H1 (cell line): ENCODE measurements at regions of chr17 and their contacts with region 1.

Region 1: GRCh38 chr17:45135192-45135977 is at the start of gene ACBD4:
- DNase-seq: peak; percentile 87 to 99
- H3K4me3 ChIP-seq: peak within 1 kb of the TSS; percentile 26 to 65 (median 58)
- H3K27ac ChIP-seq: no peak within 1 kb of the TSS
- H3K4me1 ChIP-seq: peaks cover 0 to 6% (median 2%) of the 10 kb centered on the region in 4 experiments; a peak in 3 of 7 replicates
- H3K27me3 ChIP-seq: no peaks in the 10 kb centered on the region
- CTCF ChIP-seq: peak; percentile 100
- EP300 ChIP-seq: peak in 1 of 2 experiments; percentile 41; a peak in 1 of 3 replicates
- POLR2A ChIP-seq: 0 out of 3 replicates have a peak, but pooled peaks of 1 of the 2 experiments have one; percentile 43
- RAD21 ChIP-seq: peak; percentile 94 to 95
- total RNA-seq, gene ACBD4: 9.3 and 10.7 TPM in 2 replicates

Region 2: GRCh38 chr17:45029096-45029495 is 106.3 kb before region 1 on chr17:
- CTCF ChIA-PET with region 1: no interaction called
- POLR2A ChIA-PET with region 1: no interaction called
- DNase-seq: no peak
- H3K4me3 ChIP-seq: no peak overlapping the region
- H3K27ac ChIP-seq: no peak overlapping the region; the same call in 1 of the 2 replicates
- H3K4me1 ChIP-seq: no peaks in the 10 kb centered on the region
- H3K27me3 ChIP-seq: no peaks in the 10 kb centered on the region
- CTCF ChIP-seq: no peak
- EP300 ChIP-seq: no peak
- POLR2A ChIP-seq: no peak
- RAD21 ChIP-seq: no peak

Region 3: DNA sequence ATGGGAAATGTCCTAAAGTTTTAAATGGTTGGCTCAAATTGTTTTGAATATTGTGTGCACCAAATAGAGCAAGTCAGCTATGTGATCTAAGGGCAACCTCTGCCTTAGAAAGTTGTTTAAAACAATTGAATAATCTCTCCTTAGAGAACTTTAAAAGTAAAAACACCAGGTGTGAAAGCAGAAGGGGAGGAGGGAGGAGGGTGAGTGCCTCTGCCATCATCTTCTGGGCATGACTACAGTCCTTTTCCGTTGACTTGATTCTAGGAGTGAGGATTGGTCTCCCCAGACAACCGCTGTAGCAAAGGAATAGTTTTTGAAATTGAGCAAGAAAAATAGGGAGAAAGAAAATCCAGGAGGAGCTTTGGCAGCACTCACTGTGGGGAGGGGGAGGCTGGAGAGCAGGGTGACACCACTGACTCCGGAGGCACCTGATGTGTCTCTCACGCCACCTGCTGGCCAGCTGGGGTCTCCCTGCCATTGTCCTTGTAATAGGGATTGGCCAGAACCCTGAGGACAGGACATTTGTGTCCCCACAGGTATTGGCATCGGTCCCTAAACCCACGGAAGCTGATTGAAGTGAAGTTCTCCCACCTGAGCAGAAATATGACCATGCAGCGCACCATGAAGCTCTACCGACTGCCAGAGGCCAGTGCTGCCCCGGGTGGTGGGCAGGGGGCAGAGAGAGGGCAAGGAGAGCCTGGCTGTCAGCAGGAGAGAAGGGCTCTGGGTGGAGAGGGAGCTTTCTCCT is 36.3 kb before region 1 on chr17:
- CTCF ChIA-PET with region 1: interaction called, 69 read pairs
- POLR2A ChIA-PET with region 1: no interaction called
- DNase-seq: peak; percentile 63 to 95
- H3K4me3 ChIP-seq: no peak overlapping the region
- H3K27ac ChIP-seq: no peak overlapping the region
- H3K4me1 ChIP-seq: no peaks in the 10 kb centered on the region; a peak in 1 of 7 replicates
- H3K27me3 ChIP-seq: no peaks in the 10 kb centered on the region
- CTCF ChIP-seq: peak; percentile 78 to 96 (median 95)
- EP300 ChIP-seq: no peak
- POLR2A ChIP-seq: no peak
- RAD21 ChIP-seq: peak; percentile 73 to 76

Region 4: DNA sequence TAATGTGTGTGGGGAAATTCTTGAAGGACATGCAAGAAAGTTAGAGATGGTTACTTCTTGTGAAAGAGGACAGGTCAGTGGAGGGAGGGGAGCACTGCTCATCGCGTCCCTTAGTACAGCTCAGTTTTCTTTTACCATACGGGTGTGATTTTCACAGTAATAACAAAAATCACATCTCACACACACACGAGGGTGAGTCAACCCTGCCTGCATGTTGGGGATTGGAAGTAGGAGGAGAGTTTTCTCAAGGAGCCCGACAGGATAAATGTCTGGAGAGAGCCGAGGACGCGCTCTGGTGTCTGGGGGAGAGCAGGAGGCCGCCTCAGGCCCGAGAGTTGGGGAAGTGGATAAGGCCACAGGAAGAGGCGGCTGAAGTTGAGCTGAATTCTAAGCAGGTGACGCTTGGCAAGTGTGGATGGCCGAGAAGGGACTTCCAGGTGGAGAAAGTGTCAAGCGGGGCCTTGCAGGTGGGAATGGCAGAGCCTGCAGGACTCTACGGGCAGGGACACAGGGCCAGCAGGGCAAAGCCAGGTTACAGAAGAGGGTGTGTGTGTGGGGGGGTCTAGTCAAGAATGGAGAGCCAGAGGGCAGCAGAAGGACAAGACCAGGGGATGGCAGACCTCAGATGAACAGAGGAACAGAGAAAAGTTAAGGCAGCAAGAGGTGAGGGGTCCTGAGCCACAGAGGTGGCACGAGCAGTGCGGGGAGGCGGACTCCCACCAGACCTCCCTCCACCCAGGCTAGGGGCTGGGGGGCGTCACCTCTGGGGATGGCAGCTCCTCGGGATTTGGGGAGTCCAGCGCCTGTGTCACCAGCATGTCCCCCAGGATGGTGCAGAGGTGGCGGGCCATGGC is 19.3 kb before region 1 on chr17:
- CTCF ChIA-PET with region 1: interaction called, 21 read pairs
- POLR2A ChIA-PET with region 1: interaction called, 8 read pairs
- DNase-seq: no peak
- H3K4me3 ChIP-seq: no peak overlapping the region
- H3K27ac ChIP-seq: no peak overlapping the region
- H3K4me1 ChIP-seq: peaks cover 0 to 9% (median 4%) of the 10 kb centered on the region in 4 experiments; a peak in 3 of 7 replicates
- H3K27me3 ChIP-seq: no peaks in the 10 kb centered on the region
- CTCF ChIP-seq: no peak
- EP300 ChIP-seq: no peak
- POLR2A ChIP-seq: no peak
- RAD21 ChIP-seq: no peak

Region 5: GRCh38 chr17:45161019-45161825 is 25.8 kb after region 1 on chr17:
- CTCF ChIA-PET with region 1: interaction called, 90 read pairs
- POLR2A ChIA-PET with region 1: interaction called, 17 read pairs
- DNase-seq: peak; percentile 99
- H3K4me3 ChIP-seq: peak overlapping the region; percentile 73 to 97 (median 88)
- H3K27ac ChIP-seq: peak overlapping the region; percentile 99
- H3K4me1 ChIP-seq: peaks cover 0 to 9% (median 3%) of the 10 kb centered on the region in 4 experiments; a peak in 3 of 7 replicates
- H3K27me3 ChIP-seq: no peaks in the 10 kb centered on the region
- CTCF ChIP-seq: peak in 1 of 3 experiments; percentile 52; a peak in 1 of 4 replicates
- EP300 ChIP-seq: 0 out of 3 replicates have a peak, but pooled peaks of 1 of the 2 experiments have one; percentile 21
- POLR2A ChIP-seq: peak; percentile 98 to 100
- RAD21 ChIP-seq: peak in 1 of 2 experiments; percentile 24; a peak in 1 of 4 replicates

Region 6: DNA sequence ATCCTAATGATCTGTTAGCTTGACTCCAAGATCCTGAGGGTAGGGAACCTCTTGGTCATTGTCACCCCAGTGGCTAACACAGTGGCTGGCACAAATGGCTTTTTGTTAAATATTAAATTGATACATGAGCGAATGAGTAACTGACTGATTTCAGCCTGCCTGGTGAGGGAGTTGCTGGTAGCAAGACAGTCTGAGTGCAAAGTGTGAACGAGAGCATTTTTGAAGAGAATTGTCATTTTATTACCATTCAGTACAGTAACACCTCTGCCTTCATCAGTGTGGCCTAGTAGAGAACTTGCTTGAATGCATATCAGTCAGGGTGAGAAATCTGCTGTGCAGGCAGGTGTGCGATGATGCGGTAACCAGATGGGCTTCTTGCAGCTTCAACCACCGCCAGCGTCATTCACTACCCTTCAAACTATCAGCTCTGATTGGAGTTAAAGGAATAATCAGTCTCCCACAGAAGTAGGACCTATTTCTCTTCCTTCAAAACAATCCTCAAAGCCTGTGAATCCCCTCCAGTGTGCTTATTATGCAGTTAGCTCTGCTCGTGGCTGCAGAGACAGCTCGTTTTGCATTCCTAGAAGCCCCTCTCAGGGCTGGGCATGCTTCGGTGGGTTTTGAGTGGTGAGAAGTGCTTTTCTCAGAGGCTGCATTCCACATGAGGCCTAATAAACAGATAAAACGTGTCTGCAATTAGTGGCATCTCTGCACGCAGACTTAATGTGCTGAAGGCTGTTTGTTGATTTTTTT is 55.3 kb after region 1 on chr17:
- CTCF ChIA-PET with region 1: interaction called, 156 read pairs
- POLR2A ChIA-PET with region 1: interaction called, 3 read pairs
- DNase-seq: no peak
- H3K4me3 ChIP-seq: no peak overlapping the region
- H3K27ac ChIP-seq: no peak overlapping the region
- H3K4me1 ChIP-seq: no peaks in the 10 kb centered on the region
- H3K27me3 ChIP-seq: no peaks in the 10 kb centered on the region
- CTCF ChIP-seq: no peak
- EP300 ChIP-seq: no peak
- POLR2A ChIP-seq: no peak
- RAD21 ChIP-seq: no peak

Region 7: DNA sequence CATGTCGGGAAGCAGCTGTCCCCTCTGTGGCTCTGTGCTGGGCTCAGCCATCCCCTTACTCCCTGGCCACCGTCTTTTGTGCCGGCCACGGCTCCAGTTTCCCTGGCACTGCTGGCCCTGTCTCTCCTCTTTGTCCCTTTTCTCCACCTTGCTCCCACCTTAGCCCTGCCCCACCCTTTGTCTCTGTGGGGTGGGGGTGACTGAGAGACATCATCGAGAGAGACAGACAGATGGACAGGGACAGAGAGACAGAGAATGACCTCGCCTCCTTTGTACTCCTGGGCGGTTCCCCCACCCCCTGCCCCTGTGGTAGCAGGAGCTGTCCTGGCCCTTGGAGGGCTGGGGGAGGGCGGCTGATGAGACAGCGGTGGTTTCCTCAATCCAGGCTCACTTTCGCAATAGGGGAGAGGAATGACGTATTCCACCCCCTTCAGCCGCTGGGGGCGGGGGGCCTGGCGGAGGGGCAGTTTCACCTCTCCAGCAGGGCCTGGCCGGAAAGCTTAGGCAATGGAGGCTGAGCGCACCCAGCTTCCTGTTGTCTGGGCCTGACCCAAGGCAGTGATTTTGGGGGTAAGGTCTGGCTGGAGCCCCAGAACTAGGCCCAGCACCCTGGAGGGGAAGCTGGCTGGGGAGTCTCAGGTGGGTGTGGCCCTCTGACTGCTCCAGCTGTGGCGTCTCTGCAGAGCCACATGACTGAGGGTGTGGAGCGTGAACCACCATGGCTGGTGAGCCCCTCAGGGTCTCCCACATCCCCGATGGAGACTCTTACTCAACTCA is 93.6 kb after region 1 on chr17:
- CTCF ChIA-PET with region 1: interaction called, 16 read pairs
- POLR2A ChIA-PET with region 1: no interaction called
- DNase-seq: no peak
- H3K4me3 ChIP-seq: no peak overlapping the region
- H3K27ac ChIP-seq: no peak overlapping the region
- H3K4me1 ChIP-seq: peaks cover 5 to 29% (median 20%) of the 10 kb centered on the region in 4 experiments
- H3K27me3 ChIP-seq: peaks cover 0 to 5% (median under 1%) of the 10 kb centered on the region in 4 experiments; a peak in 3 of 7 replicates
- CTCF ChIP-seq: no peak
- EP300 ChIP-seq: no peak
- POLR2A ChIP-seq: no peak
- RAD21 ChIP-seq: no peak

Region 8: GRCh38 chr17:45341533-45342158 is 206.3 kb after region 1 on chr17:
- CTCF ChIA-PET with region 1: no interaction called
- POLR2A ChIA-PET with region 1: no interaction called
- DNase-seq: peak in 1 of 2 experiments; percentile 90
- H3K4me3 ChIP-seq: peak overlapping the region in 1 of 4 experiments; percentile 24; a peak in 1 of 8 replicates
- H3K27ac ChIP-seq: no peak overlapping the region
- H3K4me1 ChIP-seq: peaks cover 2 to 8% (median 4%) of the 10 kb centered on the region in 4 experiments; a peak in 6 of 7 replicates
- H3K27me3 ChIP-seq: peaks cover 0 to 3% (median 0%) of the 10 kb centered on the region in 4 experiments; a peak in 1 of 7 replicates
- CTCF ChIP-seq: no peak
- EP300 ChIP-seq: no peak
- POLR2A ChIP-seq: 0 out of 3 replicates have a peak, but pooled peaks of 1 of the 2 experiments have one; percentile 48
- RAD21 ChIP-seq: no peak